Heart left ventricle (tissue), 16 donors: ENCODE measurements at regions of chr2 and their contacts with region 1.

Region 1: DNA sequence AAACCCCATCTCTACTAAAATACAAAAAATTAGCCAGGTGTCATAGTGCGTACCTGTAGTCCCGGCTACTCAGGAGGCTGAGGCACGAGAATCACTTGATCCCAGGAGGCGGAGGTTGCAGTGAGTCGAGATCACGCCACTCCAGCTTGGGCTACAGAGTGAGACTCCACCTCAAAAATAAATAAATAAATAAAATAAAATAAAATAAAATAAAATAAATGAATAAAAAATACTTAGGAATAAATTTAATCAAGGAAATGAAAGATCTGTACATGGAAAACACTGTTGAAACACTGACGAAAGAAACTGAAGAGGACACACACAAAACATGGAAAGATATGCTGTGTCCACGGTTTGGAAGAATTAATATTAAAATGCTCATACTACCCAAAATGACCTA is 56.5 kb upstream of the ASPRV1 start:
- DNase-seq: no peak
- ATAC-seq: no peak
- H3K4me3 ChIP-seq: no peak overlapping the region
- H3K27ac ChIP-seq: peak overlapping the region in 1 of 12 donors; percentile 77
- H3K4me1 ChIP-seq: peaks cover 0 to 13% (median 0%) of the 10 kb centered on the region in 12 donors
- H3K27me3 ChIP-seq: no peaks in the 10 kb centered on the region
- CTCF ChIP-seq: no peak
- POLR2A ChIP-seq: no peak

Region 2: DNA sequence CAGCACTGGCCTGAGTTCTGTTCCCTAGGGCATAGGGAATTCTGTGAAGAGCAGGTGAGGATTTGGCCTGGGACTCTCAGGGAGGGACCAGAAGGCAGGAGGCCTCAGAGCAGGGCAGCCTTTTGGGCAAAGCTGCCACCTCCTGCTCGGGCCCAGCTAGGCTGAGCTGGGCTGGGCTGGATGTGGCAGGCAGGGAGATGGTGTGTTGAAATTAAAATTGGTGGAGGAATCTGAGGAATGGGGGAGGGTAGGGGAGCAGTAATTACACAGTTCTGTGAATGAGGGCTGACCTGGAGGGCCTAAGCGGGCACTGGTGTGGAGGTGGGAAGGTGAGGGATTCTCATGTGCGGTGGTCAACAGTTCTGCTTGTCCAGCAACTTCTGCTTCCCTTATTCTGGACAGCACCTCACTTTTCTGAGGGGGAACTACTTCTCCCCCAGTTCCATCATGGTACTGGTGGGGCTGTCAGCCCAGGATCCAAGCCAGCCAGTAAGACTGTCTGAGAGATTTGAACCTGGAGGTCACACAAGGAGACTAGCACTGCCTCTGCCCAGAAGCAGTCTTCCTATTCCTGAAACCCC is 34.5 kb before region 1 on chr2:
- intact Hi-C with region 1: loop called in 1 of 10 experiments (anchors 2 kb)
- DNase-seq: no peak
- ATAC-seq: no peak
- H3K4me3 ChIP-seq: no peak overlapping the region
- H3K27ac ChIP-seq: no peak overlapping the region
- H3K4me1 ChIP-seq: peaks cover 0 to 21% (median 0%) of the 10 kb centered on the region in 12 donors
- H3K27me3 ChIP-seq: no peaks in the 10 kb centered on the region
- CTCF ChIP-seq: no peak
- POLR2A ChIP-seq: no peak